Testis (tissue), 5 donors: ENCODE measurements at regions of chr1 and their contacts with region 1.

Region 1: DNA sequence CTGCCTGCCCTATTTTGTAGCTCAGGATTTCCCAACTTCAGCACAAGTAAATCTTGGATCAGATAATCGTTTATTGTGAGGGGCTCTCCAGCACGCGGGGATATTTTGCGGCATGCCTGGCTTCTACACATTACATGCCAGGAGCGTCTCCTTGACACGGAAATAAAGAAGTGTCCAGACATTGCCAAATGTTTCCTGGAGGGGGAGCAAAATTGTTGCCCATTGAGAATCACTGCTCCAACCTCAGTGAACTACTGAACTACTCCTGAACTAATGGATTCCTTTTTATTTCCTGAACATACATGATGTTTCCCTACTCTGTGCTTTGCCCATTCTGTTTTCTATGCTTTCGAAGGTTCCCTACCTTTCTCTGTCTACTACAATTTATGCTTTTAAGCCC is 1359.1 kb upstream of the ADGRL2 start:
- DNase-seq: no peak
- H3K4me3 ChIP-seq: no peak overlapping the region
- H3K27ac ChIP-seq: no peak overlapping the region
- H3K4me1 ChIP-seq: no peaks in the 10 kb centered on the region
- H3K27me3 ChIP-seq: no peaks in the 10 kb centered on the region
- CTCF ChIP-seq: no peak
- POLR2A ChIP-seq: no peak

Region 2: DNA sequence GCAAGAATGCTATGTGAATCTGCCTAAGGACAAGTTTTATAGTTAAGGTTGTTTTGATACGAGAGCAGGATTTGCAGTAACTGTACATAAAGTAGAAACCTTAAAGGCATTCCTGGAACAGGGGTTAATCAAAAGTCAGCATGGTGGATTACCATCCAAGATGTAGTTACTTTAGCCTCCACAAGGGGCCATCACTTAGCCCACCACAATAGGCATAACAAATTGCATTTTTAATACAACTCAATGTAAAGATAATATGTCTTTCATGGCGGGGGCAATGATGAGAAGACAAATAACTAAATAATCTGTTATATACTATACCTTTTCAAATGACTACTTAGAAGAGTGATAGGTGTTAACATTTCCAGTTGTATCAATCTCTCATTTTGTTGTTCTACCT is 823.9 kb before region 1 on chr1:
- intact Hi-C with region 1: loop called (anchors 10 kb)
- DNase-seq: no peak
- H3K4me3 ChIP-seq: no peak overlapping the region
- H3K27ac ChIP-seq: no peak overlapping the region
- H3K4me1 ChIP-seq: no peaks in the 10 kb centered on the region
- H3K27me3 ChIP-seq: no peaks in the 10 kb centered on the region
- CTCF ChIP-seq: peak in 1 of 3 experiments; percentile 31
- POLR2A ChIP-seq: no peak

Region 3: DNA sequence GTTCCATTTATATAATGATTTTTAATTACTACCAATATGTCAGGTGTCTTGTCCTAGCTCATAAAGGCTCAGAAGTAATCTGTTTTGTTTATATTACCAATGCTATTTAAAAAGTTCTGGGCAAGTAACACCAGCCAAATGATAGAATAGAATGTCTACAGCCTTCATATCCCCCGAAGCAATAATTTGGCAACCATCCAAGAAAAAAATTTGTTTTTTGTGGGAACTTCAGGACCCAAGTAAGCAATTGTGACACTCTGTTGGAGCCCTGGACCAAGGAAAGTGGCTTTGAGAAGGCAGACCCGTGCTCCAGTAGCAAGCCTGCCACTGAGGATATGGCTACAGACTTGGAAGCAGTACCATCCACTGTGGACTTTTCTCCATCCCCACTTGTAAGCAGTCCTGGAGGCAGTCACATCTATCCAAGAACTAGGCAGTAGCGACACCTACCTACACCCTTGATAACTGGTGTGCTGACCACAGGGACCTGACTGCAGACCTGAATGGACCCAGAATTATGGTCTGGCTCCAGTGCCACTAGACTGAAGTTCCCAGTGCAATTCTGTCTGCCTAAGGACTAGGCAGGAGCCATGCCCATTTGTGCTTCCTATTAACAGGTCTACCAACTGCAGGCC is 488.3 kb after region 1 on chr1:
- intact Hi-C with region 1: no loop called
- DNase-seq: no peak
- H3K4me3 ChIP-seq: no peak overlapping the region
- H3K27ac ChIP-seq: no peak overlapping the region
- H3K4me1 ChIP-seq: no peaks in the 10 kb centered on the region
- H3K27me3 ChIP-seq: no peaks in the 10 kb centered on the region
- CTCF ChIP-seq: no peak
- POLR2A ChIP-seq: no peak